Calu3 (cell line): ENCODE measurements at regions of chr5 and their contacts with region 1.

Region 1: DNA sequence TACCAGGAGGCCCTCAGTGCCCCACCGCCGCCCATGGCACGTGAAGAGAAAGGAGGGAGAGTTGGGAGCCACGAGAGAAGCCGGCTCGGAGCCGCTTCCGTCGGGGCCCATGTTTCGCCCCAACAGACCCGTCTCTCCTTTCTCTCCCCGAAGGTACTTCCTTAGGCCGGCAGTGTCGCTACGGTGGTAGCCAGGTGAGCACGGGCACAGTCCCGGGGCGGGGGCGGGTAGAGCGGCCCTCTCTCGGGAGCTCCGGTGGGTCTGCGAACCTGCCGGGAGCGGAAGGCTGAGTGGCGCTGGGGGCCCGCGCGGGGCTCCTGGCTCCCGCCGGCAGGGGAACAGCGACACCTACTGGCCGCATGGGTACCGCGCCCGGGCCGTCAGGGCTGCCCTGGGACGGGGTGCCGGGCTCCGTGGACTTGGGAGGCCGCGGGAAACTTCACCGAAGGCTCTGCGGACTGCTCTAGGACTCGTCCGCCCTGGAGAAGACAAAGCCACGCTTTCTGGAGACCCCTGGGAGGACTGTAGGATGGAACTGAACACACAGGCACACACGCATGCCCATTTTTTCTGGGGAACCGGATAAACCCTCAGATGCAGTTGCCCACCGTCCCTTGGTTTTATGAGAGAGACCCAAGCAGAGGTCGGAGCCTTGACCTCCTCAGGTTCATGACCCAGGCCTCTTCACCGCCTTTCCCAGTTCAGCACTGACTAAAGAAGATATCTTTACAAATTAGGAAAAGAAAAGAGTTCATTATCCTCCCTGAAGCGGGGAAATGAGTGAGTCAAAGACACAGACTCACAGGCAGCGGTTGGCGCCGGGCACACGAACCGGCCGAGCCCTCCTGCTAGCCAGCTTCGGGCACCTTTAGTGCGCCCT is 202.5 kb downstream of the MEF2C start:
- DNase-seq: peak; percentile 96
- H3K4me3 Mint-ChIP-seq: peak overlapping the region; percentile 65
- H3K27ac Mint-ChIP-seq: no peak overlapping the region
- H3K4me1 Mint-ChIP-seq: peaks cover 22% of the 10 kb centered on the region
- H3K27me3 Mint-ChIP-seq: peaks cover 12% of the 10 kb centered on the region
- CTCF ChIP-seq: peak; percentile 99

Region 2: DNA sequence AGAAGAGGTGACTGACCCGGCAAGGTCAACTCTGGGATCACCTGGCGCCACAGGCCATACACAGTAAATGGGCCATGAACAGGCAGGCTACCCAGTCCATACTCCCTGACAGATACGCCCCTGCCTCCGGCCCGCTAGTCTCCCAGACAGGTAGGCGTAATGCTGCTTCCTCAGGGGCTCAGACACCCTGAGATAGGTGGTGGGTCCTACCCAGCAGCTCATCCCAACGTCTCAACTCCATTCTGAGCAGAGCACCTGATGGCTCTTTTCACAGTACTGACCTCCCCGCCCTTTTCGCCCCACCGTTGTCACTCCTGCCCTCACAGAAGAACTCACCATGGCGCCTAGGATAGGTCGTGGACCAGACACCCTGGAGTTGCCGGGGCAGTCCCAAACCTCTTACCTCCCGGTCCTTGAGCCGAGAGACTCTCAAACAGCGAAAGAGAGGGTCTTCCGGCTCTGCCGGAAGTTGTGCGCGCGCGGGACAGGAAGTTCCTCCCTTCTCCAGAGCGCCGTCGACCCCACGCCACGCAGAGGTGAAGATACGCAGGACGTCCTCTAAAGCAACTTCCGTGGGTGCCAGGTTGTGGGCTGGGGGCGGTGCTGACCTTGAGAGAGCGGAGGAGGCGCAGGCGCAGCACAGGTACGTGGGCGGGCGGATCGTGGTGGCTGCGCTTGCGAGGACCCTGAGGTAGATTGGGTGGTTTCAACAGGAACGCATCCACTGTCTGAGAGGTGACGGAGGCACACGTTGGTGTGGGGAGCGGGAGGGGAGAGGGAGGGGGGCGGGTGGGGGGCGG is 411.9 kb before region 1 on chr5 and contains the start of gene TMEM161B:
- CTCF ChIA-PET with region 1: no interaction called
- intact Hi-C with region 1: loop called (anchors 5 kb)
- DNase-seq: peak; percentile 95
- H3K4me3 Mint-ChIP-seq: peak within 1 kb of the TSS; percentile 98
- H3K27ac Mint-ChIP-seq: peak within 1 kb of the TSS; percentile 94
- H3K4me1 Mint-ChIP-seq: peaks cover 32% of the 10 kb centered on the region
- H3K27me3 Mint-ChIP-seq: no peaks in the 10 kb centered on the region
- CTCF ChIP-seq: no peak
- total RNA-seq, gene TMEM161B: 34.1 and 35.7 TPM in 2 replicates

Region 3: DNA sequence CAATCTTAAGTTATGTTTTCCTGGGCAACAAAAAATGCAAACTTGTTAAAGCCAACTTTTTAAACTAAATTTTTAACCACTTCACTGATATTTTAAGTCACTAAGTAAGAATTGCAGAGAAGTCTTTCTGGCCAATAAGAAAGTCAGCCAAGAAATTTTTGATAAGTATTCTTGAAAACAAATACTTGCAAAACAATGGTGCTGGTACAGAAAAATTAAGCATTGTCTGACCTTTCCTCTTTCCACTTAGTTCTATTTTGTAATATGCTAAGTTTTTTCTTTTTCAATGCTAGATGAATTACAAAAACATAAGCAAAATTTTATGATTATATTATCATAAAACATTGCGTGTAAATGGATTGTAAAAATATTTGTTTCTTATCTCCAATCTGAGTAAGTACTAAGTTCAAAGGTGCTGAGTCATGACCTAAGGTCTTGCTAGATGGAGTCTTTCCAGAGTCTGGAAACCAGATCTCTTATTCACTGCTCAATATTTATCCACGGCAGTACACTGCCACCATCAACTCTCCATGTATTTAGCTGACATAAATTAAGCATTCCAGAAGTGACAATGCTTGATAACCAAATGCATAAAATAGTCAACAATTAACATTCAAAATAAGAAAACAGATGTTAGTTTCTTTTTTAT is 62.9 kb after region 1 on chr5:
- CTCF ChIA-PET with region 1: no interaction called
- intact Hi-C with region 1: no loop called
- DNase-seq: peak; percentile 12
- H3K4me3 Mint-ChIP-seq: no peak overlapping the region
- H3K27ac Mint-ChIP-seq: no peak overlapping the region
- H3K4me1 Mint-ChIP-seq: peaks cover 4% of the 10 kb centered on the region
- H3K27me3 Mint-ChIP-seq: no peaks in the 10 kb centered on the region
- CTCF ChIP-seq: no peak